Caco-2 (cell line): ENCODE measurements at regions of chr12 and their contacts with region 1.

Region 1: DNA sequence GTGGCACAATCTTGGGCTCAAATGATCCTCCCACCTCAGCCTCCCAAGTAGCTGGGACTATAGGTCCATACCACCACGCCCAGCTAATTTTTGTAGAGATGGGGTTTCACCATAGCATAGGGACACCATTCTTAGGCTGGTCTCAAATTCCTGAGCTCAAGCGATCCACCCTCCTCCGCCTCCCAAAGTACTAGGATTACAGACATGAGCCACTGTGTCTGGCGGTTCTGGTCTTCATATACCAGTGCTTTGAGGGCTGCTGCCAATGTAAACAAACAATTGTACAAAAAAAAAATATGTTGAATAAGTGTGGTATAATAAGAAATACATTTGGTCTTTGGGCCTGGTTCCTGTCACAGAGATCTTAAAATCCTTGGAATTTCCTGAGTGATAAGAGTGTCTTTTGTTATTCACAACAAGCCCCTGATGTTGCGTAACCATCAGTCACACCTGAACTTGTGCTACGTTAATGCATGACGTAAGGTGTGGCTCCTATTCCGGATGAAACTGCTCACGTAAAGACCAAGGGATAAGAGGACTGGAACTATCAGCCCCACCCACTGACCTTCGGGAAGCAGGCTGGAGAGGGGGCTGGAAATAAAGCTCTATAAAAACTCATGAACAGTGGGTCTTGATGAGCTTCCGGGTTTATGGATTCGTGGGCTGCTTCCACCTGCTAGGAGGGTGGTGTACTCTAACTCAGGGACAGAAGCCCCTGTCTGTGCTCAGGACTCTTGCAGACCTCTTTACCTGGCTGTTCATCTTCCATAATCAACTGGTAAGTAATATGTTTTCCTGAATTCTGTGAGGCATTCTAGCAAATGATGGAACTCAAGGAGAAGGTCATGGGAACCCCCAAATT is 16.5 kb upstream of the RIMKLB start:
- DNase-seq: peak; percentile 36 to 58
- H3K4me3 ChIP-seq: no peak overlapping the region
- H3K4me3 Mint-ChIP-seq: peak overlapping the region; percentile 41
- H3K27ac Mint-ChIP-seq: no peak overlapping the region
- H3K4me1 ChIP-seq: peaks cover 8% of the 10 kb centered on the region; the same call in 1 of the 2 replicates
- H3K4me1 Mint-ChIP-seq: peaks cover 7% of the 10 kb centered on the region
- H3K27me3 ChIP-seq: no peaks in the 10 kb centered on the region
- H3K27me3 Mint-ChIP-seq: peaks cover 14% of the 10 kb centered on the region
- CTCF ChIP-seq: no peak

Region 2: GRCh38 chr12:8644345-8645248 is 36.7 kb before region 1 on chr12:
- CTCF ChIA-PET with region 1: no interaction called
- POLR2A ChIA-PET with region 1: no interaction called
- intact Hi-C with region 1: no loop called
- DNase-seq: no peak
- H3K4me3 ChIP-seq: no peak overlapping the region
- H3K4me3 Mint-ChIP-seq: no peak overlapping the region
- H3K27ac Mint-ChIP-seq: no peak overlapping the region
- H3K4me1 ChIP-seq: no peaks in the 10 kb centered on the region
- H3K4me1 Mint-ChIP-seq: no peaks in the 10 kb centered on the region
- H3K27me3 ChIP-seq: no peaks in the 10 kb centered on the region; the same call in 1 of the 2 replicates
- H3K27me3 Mint-ChIP-seq: peaks cover 27% of the 10 kb centered on the region
- CTCF ChIP-seq: no peak

Region 3: GRCh38 chr12:8823565-8824300 is 142.5 kb after region 1 on chr12:
- CTCF ChIA-PET with region 1: interaction called, 8 read pairs
- POLR2A ChIA-PET with region 1: no interaction called
- intact Hi-C with region 1: loop called (anchors 1 kb)
- DNase-seq: peak in 1 of 2 experiments; percentile 35
- H3K4me3 ChIP-seq: no peak overlapping the region
- H3K4me3 Mint-ChIP-seq: no peak overlapping the region
- H3K27ac Mint-ChIP-seq: no peak overlapping the region
- H3K4me1 ChIP-seq: no peaks in the 10 kb centered on the region
- H3K4me1 Mint-ChIP-seq: peaks cover under 1% of the 10 kb centered on the region
- H3K27me3 ChIP-seq: no peaks in the 10 kb centered on the region
- H3K27me3 Mint-ChIP-seq: peaks cover 10% of the 10 kb centered on the region
- CTCF ChIP-seq: peak; percentile 48 to 51

Region 4: DNA sequence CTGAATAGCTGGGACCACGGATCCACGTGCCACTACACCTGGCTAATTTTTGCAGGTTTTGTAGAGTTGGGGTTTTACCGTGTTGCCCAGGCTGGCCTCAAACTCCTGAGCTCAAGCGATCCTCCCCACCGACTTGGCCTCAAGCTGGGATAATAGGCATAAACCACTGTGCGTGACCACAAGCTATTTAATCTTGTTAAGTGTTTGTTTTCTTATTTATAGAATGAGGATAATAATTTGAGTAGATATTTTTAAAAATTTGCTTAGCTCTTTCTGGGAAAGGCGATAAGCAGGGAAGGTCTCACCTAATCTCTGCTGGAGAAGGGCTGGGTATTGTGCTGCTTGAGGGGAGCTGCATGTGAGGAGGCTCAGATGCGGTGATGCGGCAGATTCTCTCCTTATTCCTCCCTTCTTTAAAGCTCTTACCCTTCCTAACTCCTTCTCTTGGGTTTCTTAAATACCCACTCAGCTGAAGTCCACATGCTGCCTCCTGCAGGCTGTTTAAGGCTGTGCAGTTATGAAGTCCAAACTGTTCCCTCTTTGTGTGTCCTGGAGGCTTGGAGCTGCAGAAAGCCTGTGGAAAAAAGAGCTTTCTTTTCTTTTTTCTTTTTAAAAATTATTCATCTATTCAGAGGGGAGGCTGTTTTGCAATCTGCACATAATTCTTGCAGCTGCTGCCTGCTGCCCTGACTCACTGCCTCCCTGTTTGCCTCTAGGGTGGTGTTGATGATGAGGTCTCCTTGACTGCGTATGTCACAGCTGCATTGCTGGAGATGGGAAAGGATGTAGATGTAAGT is 179.1 kb after region 1 on chr12:
- CTCF ChIA-PET with region 1: interaction called, 7 read pairs
- POLR2A ChIA-PET with region 1: no interaction called
- intact Hi-C with region 1: loop called (anchors 1 kb)
- DNase-seq: peak; percentile 25 to 47
- H3K4me3 ChIP-seq: no peak overlapping the region
- H3K4me3 Mint-ChIP-seq: no peak overlapping the region
- H3K27ac Mint-ChIP-seq: no peak overlapping the region
- H3K4me1 ChIP-seq: no peaks in the 10 kb centered on the region
- H3K4me1 Mint-ChIP-seq: no peaks in the 10 kb centered on the region
- H3K27me3 ChIP-seq: no peaks in the 10 kb centered on the region
- H3K27me3 Mint-ChIP-seq: peaks cover 9% of the 10 kb centered on the region
- CTCF ChIP-seq: peak; percentile 64 to 65

Region 5: DNA sequence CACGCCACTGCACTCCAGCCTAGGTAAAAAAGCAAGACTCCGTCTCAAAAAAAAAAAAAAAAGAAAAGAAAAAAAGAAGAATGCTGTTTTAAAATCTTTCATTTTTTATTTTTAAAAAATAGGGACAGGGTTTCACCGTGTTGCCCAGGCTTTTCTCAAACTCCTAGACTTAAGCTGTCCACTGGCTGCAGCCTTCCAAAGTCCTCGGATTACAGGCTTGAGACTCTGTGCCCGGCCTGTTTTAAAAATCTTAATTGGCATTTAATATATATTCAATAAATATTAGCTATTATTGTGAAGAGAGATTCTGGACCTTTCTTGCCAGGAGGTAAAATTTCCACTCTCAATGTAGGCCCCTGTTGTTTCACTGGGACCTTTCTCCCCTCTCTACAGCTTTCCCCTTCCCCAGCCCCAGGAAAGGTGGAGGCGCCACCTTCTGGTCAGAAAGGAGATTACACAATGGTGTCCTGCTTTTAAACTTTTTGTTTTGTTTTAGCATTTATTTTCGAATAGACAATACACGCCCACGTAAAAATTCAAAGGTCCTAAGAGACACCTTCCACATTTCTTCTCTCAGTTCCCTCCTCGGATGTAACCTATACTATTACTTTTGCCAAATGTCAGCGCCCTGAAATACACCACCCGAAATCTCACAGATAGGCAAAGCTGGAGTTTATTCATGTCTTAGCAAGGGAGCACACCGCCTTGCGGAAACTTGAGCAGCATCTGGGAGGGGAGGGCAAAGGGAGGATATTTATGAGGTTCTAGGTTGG is 209.2 kb after region 1 on chr12:
- CTCF ChIA-PET with region 1: interaction called, 11 read pairs
- POLR2A ChIA-PET with region 1: no interaction called
- intact Hi-C with region 1: loop called (anchors 1 kb)
- DNase-seq: peak; percentile 57 to 81
- H3K4me3 ChIP-seq: no peak overlapping the region
- H3K4me3 Mint-ChIP-seq: peak overlapping the region; percentile 61
- H3K27ac Mint-ChIP-seq: no peak overlapping the region
- H3K4me1 ChIP-seq: 0 out of 2 replicates have a peak, but pooled peaks cover 3% of the 10 kb centered on the region
- H3K4me1 Mint-ChIP-seq: peaks cover 6% of the 10 kb centered on the region
- H3K27me3 ChIP-seq: no peaks in the 10 kb centered on the region
- H3K27me3 Mint-ChIP-seq: peaks cover 2% of the 10 kb centered on the region
- CTCF ChIP-seq: peak; percentile 93 to 98

Region 6: GRCh38 chr12:9039397-9039977 is 358.2 kb after region 1 on chr12:
- CTCF ChIA-PET with region 1: interaction called, 3 read pairs
- POLR2A ChIA-PET with region 1: no interaction called
- intact Hi-C with region 1: loop called (anchors 1 kb)
- DNase-seq: peak in 1 of 2 experiments; percentile 55
- H3K4me3 ChIP-seq: no peak overlapping the region
- H3K4me3 Mint-ChIP-seq: no peak overlapping the region
- H3K27ac Mint-ChIP-seq: no peak overlapping the region
- H3K4me1 ChIP-seq: no peaks in the 10 kb centered on the region
- H3K4me1 Mint-ChIP-seq: no peaks in the 10 kb centered on the region
- H3K27me3 ChIP-seq: 0 out of 2 replicates have a peak, but pooled peaks cover 1% of the 10 kb centered on the region
- H3K27me3 Mint-ChIP-seq: peaks cover 14% of the 10 kb centered on the region
- CTCF ChIP-seq: peak; percentile 70 to 89